ENCODE measurements at regions of chr12 and their contacts with region 1.

Region 1: DNA sequence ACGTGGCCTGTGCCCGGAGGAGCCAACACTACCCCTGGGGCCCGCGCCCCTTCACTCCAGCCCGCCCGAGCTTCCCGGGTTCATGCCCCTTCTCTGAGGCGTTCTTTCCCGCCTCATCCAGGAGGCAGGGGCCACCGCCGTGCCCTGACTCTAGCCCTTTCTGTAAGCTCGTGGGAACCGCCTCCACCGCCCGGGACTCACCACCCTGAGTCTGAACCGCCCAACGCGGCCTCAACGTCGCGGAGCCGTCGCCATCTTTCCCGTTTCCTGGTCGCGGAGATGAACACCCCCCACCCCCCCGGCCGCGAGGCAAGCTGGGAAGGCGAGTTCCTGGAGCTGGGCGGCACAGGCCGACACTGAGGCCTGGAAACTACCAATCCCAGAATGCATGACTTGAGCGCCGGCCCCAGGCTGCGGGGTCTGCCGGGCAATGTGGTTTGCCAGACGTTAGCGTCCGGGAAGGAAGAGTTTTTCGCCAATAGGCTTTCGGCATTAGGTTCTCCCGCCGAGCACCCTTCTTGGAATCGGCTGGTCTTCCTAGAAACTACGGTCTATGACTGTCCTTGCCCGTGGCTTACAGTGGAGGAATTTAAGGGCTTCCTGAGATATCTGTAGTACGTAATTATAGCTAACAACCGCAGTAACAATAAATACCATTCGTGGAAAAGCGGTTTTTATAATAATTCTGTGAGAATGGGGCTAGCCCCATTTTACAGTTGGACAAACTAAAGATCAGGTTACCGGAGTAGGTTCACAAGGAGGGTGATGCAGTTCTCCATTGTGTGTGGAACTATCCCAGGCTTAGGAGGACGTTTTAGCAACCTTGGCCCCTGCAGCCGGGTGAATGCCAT is at the start of gene DDX23:
- H3K4me3 ChIP-seq: peak within 1 kb of the TSS; percentile 96
- H3K27ac ChIP-seq: peak within 1 kb of the TSS; percentile 79
- H3K4me1 ChIP-seq: peaks cover 4% of the 10 kb centered on the region
- CTCF ChIP-seq: no peak; the same call in 1 of the 2 replicates

Region 2: DNA sequence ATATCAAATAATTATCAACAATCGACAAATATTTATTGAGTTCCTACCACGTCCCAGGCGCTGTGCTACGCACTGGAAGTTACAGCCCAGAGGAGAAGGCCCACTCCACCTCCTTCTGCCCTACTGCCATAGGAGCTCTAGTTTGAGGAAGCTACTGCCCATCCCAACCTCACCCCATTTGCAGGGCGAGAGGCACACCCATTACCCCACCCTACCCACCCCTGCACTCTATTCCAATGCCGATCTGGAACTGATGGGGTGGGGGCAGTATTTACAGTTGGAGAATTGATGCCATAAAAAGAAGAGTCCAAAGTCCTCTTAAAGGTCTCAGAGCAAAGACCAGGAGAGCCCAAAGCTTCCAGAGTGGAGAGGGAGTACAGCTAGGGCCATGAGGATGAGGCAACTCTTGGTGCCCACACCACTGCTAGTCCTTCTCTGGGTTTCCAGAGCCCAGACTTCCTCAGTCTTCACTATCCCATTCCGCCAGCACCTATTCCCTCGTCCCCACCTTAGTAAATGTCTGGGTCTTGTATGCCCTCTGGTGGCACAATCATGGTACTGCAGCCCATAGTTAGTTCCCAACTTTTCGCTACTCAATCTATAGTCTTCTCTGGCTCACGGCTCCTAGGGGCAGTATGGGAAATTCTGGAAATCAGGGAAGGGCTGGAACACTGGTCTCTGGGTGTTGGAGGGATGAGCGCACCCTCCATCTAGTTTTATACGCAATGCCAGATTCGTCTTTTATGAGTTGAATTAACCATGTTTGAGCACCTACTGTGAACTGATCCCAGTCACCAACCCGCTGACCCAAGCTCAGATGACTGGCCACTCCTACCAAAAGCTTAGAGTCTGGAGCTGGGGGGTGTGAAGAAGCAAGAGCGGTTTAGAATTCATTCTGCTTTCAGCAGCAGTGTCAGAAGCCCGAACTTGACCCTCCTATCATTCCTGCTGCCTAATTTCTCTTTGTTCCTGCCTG is 56.3 kb before region 1 on chr12:
- CTCF ChIA-PET with region 1: interaction called, 3 read pairs
- POLR2A ChIA-PET with region 1: interaction called, 12 read pairs
- H3K4me3 ChIP-seq: no peak overlapping the region
- H3K27ac ChIP-seq: no peak overlapping the region
- H3K4me1 ChIP-seq: no peaks in the 10 kb centered on the region
- CTCF ChIP-seq: peak; percentile 96

Region 3: DNA sequence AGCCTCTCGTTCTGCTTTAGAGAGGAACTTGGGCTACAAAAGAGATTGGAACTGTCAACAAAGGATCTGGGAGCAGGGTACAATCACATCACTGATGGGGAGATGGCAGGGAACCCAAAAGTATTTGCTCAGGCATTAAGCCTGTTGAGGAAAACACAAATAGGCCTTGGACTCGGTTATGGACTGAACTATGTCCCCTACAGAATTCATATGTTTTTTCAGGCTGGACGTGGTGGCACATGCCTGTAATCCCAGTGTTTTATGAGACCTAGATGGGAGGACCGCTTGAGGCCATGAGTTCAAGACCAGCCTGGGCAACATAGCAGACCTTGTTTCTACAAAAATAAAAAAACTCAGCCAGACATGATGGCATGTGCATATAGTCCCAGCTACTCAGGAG is 14.1 kb before region 1 on chr12:
- CTCF ChIA-PET with region 1: interaction called, 12 read pairs
- POLR2A ChIA-PET with region 1: interaction called, 5 read pairs
- H3K4me3 ChIP-seq: no peak overlapping the region
- H3K27ac ChIP-seq: no peak overlapping the region
- H3K4me1 ChIP-seq: no peaks in the 10 kb centered on the region
- CTCF ChIP-seq: no peak

Region 4: DNA sequence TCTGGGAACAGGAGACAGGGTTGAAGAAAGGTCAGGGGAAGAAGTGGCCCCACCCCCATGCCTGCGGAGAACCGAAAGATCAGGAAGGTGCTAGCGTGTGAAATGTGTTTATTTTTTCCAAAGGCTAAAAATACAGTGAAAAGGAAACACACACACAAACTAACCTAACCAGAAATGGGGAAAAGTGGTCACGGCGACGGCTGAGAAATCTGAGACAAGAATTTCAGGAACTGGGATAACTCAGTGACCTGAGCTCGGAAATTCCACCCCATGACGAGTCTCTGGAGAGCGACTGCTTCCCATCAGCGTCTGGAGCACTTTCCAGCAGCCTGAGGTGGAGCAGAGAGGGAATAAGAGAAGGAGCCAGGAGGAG is 30.2 kb after region 1 on chr12:
- CTCF ChIA-PET with region 1: interaction called, 64 read pairs
- POLR2A ChIA-PET with region 1: interaction called, 8 read pairs
- H3K4me3 ChIP-seq: no peak overlapping the region
- H3K27ac ChIP-seq: no peak overlapping the region
- H3K4me1 ChIP-seq: peaks cover 20% of the 10 kb centered on the region
- CTCF ChIP-seq: no peak

Region 5: DNA sequence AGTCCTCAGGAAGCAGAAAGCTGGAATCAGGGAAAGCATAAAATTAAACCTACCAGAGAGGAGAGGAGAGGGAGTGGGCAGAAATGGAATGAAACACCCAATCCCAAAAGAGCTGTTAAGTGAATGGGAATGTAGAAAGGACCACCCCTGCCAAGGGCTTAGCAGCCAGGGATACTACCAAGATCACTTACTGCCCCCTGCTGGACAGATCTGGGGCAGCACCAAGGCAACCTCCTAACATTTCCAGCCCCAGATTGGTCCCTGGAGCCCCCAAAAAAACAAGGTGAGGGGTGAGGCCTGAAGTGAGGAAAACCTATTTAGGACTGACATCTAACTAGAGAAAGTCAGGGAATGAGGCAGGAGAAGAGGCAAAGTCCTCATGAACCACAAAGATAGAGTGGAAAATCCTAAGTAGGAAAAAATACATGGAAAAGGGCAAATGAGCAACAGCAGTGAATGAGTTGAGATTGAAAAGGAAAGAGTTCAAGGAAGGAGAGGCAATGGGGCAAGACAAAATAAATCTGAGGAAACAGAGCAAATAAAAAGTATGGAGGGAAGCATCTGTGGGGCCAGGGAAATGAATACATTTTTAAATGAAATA is 84.4 kb after region 1 on chr12:
- CTCF ChIA-PET with region 1: interaction called, 95 read pairs
- POLR2A ChIA-PET with region 1: interaction called, 3 read pairs
- H3K4me3 ChIP-seq: no peak overlapping the region
- H3K27ac ChIP-seq: no peak overlapping the region
- H3K4me1 ChIP-seq: no peaks in the 10 kb centered on the region
- CTCF ChIP-seq: peak; percentile 67

Region 6: GRCh38 chr12:48988030-48988649 is 136.0 kb after region 1 on chr12:
- CTCF ChIA-PET with region 1: interaction called, 41 read pairs
- POLR2A ChIA-PET with region 1: interaction called, 6 read pairs
- H3K4me3 ChIP-seq: no peak overlapping the region
- H3K27ac ChIP-seq: no peak overlapping the region
- H3K4me1 ChIP-seq: no peaks in the 10 kb centered on the region; the same call in 1 of the 2 replicates
- CTCF ChIP-seq: peak; percentile 82

Region 7: GRCh38 chr12:49088190-49088931 is 236.3 kb after region 1 on chr12:
- CTCF ChIA-PET with region 1: no interaction called
- POLR2A ChIA-PET with region 1: no interaction called
- H3K4me3 ChIP-seq: peak overlapping the region; percentile 25
- H3K27ac ChIP-seq: no peak overlapping the region
- H3K4me1 ChIP-seq: no peaks in the 10 kb centered on the region
- CTCF ChIP-seq: peak; percentile 97

Measured in HEK293 (cell line).